PC-3 (cell line): ENCODE measurements at regions of chr1 and their contacts with region 1.

Region 1: DNA sequence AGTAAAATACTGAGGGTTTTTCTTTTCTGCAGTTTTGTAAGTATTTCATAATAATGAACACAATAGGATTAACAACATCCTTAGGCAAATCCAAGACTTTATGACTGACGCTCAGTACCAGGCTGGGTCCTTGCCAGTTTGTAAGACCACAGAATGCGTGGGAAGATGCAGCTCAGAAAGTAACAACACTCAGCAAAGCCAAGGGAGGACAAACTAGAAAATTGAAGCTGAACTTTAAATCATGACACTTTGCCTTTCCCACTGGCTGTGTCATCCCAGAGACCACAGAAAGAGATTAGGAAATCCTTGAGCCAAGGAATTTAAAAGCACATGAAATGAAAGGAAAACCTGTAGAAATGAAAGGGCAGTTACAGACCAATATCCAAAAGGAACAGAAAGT is 426.3 kb upstream of the CHRM3 start:
- DNase-seq: peak; percentile 97
- ATAC-seq: peak; percentile 61
- H3K4me3 ChIP-seq: peak overlapping the region; percentile 22; the same call in 1 of the 2 replicates
- H3K27ac ChIP-seq: peak overlapping the region; percentile 91
- H3K4me1 ChIP-seq: peaks cover 38% of the 10 kb centered on the region
- H3K27me3 ChIP-seq: no peaks in the 10 kb centered on the region
- CTCF ChIP-seq: no peak

Region 2: GRCh38 chr1:238944028-238944427 is 16.0 kb before region 1 on chr1:
- CTCF ChIA-PET with region 1: no interaction called
- POLR2A ChIA-PET with region 1: no interaction called
- intact Hi-C with region 1: no loop called
- DNase-seq: no peak
- ATAC-seq: no peak
- H3K4me3 ChIP-seq: no peak overlapping the region
- H3K27ac ChIP-seq: no peak overlapping the region
- H3K4me1 ChIP-seq: no peaks in the 10 kb centered on the region
- H3K27me3 ChIP-seq: no peaks in the 10 kb centered on the region
- CTCF ChIP-seq: peak; percentile 21; the same call in 1 of the 2 replicates

Region 3: DNA sequence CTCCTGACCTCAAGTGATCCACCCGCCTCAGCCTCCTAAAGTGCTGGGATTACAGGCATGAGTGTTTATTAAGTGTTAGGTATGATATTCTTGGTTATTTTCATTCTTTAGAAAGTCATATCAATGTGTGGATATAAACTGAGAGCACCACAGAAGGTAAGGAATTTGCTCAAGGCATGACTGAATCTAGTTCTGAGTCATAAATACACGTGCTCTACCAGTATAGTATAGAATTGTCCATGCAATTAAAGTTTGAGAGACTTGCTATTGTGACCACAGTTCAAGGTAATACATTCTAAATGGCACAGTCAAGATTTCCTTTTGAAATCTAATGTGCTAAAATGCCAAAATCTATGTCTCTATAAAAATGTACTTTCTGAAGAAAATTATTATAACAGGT is 25.2 kb after region 1 on chr1:
- CTCF ChIA-PET with region 1: interaction called, 3 read pairs
- POLR2A ChIA-PET with region 1: no interaction called
- intact Hi-C with region 1: loop called (anchors 2 kb)
- DNase-seq: peak; percentile 48
- ATAC-seq: peak; percentile 84
- H3K4me3 ChIP-seq: no peak overlapping the region
- H3K27ac ChIP-seq: no peak overlapping the region
- H3K4me1 ChIP-seq: 0 out of 2 replicates have a peak, but pooled peaks cover 10% of the 10 kb centered on the region
- H3K27me3 ChIP-seq: no peaks in the 10 kb centered on the region
- CTCF ChIP-seq: no peak

Region 4: GRCh38 chr1:239164451-239165180 is 204.5 kb after region 1 on chr1:
- CTCF ChIA-PET with region 1: no interaction called
- POLR2A ChIA-PET with region 1: no interaction called
- intact Hi-C with region 1: loop called (anchors 5 kb)
- DNase-seq: peak; percentile 97
- ATAC-seq: peak; percentile 46
- H3K4me3 ChIP-seq: no peak overlapping the region
- H3K27ac ChIP-seq: peak overlapping the region; percentile 38
- H3K4me1 ChIP-seq: peaks cover 26% of the 10 kb centered on the region
- H3K27me3 ChIP-seq: no peaks in the 10 kb centered on the region
- CTCF ChIP-seq: no peak

Region 5: DNA sequence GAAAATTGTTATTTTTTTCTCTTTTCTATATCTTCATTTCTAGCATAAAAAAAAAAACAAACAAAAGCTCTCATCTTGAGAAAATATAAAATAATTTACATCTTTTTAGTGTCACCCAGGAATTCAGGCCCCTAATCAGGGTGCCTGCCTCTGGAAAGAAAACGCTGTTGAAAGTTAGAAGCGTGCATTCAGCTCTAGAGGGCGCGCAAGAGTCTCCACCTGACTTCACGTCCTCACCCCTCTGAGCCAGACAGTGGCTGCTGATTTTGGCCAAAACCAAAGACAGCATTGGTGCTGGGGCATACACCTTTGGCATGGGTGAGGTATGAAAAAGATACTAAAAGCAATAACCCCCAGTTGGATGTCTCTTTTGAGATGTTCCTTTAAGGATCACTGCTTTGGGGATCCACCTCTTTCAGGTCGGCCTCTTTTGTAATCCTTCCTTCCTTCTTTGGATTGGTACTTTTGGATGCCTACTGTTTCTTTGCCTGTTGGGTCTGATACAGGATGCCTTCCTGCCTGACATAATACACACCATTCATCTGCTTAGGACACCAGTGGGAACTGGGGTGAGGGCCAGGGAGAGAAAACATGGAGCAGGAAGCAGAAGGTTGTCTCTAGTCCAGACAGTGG is 348.7 kb after region 1 on chr1:
- CTCF ChIA-PET with region 1: no interaction called
- POLR2A ChIA-PET with region 1: no interaction called
- intact Hi-C with region 1: loop called (anchors 5 kb)
- DNase-seq: peak; percentile 66
- ATAC-seq: peak; percentile 76
- H3K4me3 ChIP-seq: no peak overlapping the region
- H3K27ac ChIP-seq: no peak overlapping the region
- H3K4me1 ChIP-seq: peaks cover 9% of the 10 kb centered on the region
- H3K27me3 ChIP-seq: no peaks in the 10 kb centered on the region
- CTCF ChIP-seq: peak; percentile 91

Region 6: DNA sequence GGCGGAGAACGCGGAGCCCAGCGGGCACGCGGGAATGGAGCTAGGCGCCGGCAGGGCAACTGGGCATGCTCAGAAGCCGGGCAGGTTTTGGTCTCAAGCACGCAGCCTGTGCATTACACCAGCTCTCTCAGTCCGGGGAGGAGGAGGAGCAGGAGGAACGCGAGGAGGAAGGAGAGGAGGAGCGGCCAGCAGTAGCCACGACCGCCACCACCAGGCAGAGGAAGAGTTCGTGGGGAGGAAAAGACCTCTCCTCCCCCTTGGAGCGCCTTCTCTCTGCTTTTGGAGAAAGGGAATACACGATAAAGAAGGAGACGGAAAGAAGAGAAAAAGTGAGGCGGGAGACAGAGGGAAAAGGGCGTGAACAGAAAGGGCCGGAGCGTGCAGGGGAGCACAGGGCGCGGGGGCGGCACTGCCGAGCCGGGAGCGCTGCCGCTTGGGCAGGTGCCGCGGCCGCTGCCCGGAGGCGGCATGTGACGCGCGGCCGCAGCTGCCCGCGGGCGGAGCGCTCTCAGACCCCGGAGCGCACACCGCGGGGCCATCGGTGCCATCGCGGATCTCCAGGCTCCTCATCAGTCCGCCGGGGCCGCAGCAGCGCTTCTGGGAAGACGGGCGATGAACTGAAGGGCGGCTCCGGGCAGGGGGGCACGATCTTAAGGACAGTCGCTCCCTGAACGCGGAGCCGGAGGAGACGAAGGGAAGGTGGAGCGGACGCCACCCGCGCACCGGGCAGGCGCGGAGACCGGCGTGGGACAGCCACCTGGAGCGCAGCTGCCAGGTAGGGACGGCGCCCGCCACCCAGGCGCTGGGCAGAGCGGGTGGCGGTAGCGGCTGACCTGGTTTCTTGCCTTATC is 426.6 kb after region 1 on chr1 and contains the start of gene CHRM3:
- CTCF ChIA-PET with region 1: no interaction called
- POLR2A ChIA-PET with region 1: no interaction called
- intact Hi-C with region 1: loop called (anchors 2 kb)
- DNase-seq: peak; percentile 90
- ATAC-seq: peak; percentile 82
- H3K4me3 ChIP-seq: peak within 1 kb of the TSS; percentile 76
- H3K27ac ChIP-seq: 0 out of 2 replicates have a peak within 1 kb of the TSS, but pooled peaks have one; percentile 9
- H3K4me1 ChIP-seq: peaks cover 15% of the 10 kb centered on the region; the same call in 1 of the 2 replicates
- H3K27me3 ChIP-seq: peaks cover 30% of the 10 kb centered on the region
- CTCF ChIP-seq: peak; percentile 60
- total RNA-seq, gene CHRM3: 1.2 and 3.5 TPM in 2 replicates

Region 7: GRCh38 chr1:239814303-239814881 is 854.3 kb after region 1 on chr1:
- CTCF ChIA-PET with region 1: no interaction called
- POLR2A ChIA-PET with region 1: no interaction called
- intact Hi-C with region 1: loop called (anchors 10 kb)
- DNase-seq: peak; percentile 99
- ATAC-seq: peak; percentile 80
- H3K4me3 ChIP-seq: peak overlapping the region; percentile 56
- H3K27ac ChIP-seq: peak overlapping the region; percentile 90
- H3K4me1 ChIP-seq: peaks cover 46% of the 10 kb centered on the region
- H3K27me3 ChIP-seq: no peaks in the 10 kb centered on the region
- CTCF ChIP-seq: peak; percentile 49